ENCODE measurements at regions of chr2 and their contacts with region 1.

Region 1: DNA sequence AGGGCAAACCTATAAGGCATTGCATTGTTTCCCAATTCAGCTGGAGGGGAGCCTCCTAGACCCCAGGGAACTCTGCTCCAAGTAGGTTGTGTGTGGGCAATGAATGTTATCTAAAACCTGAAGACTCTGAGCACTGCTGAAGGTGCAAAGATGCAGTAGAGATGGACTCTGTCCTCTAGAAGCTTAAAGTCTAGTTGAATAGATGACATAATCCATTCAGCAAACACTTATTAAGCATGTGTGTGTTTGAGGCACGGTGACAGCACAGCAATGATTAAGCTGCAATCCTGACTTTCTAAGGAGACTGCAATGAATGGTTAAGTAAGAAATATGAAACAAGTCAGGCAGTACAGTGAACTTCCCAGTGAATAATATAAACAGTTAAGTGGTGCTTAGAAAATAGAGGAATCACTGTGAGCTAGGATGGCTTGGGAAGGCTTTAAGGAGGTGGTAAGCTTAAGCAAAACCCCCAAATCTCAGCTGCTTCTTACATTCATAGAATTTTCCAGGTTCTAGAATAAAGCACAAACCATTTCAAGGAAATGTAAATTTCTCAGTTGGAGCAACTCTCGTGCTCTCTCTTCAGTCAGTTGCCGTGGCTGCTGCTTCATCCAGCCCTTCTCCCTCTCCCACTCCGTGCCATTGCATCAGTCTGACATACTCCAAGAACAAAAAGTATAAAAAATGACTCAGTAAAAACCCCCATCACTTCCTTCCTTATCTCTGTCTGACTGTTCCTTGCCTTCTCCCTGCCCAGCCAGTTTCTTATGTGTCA is 19.1 kb downstream of the MXD1 start:
- DNase-seq: peak; percentile 87
- H3K4me3 ChIP-seq: peak overlapping the region in 1 of 3 experiments; percentile 30
- H3K27ac ChIP-seq: peak overlapping the region; percentile 95
- H3K4me1 ChIP-seq: peaks cover 37% of the 10 kb centered on the region
- H3K27me3 ChIP-seq: no peaks in the 10 kb centered on the region
- CTCF ChIP-seq: no peak
- POLR2A ChIP-seq: peak; percentile 77

Region 2: GRCh38 chr2:69946351-69947077 is 12.5 kb after region 1 on chr2:
- CTCF ChIA-PET with region 1: interaction called, 19 read pairs
- POLR2A ChIA-PET with region 1: interaction called, 7 read pairs
- dilution Hi-C with region 1: no loop called
- intact Hi-C with region 1: no loop called
- DNase-seq: peak; percentile 41
- H3K4me3 ChIP-seq: no peak overlapping the region
- H3K27ac ChIP-seq: peak overlapping the region; percentile 54
- H3K4me1 ChIP-seq: peaks cover 25% of the 10 kb centered on the region
- H3K27me3 ChIP-seq: no peaks in the 10 kb centered on the region
- CTCF ChIP-seq: no peak
- POLR2A ChIP-seq: no peak

Region 3: GRCh38 chr2:70009762-70010575 is 75.9 kb after region 1 on chr2:
- CTCF ChIA-PET with region 1: no interaction called
- POLR2A ChIA-PET with region 1: no interaction called
- dilution Hi-C with region 1: no loop called
- intact Hi-C with region 1: no loop called
- DNase-seq: no peak
- H3K4me3 ChIP-seq: no peak overlapping the region
- H3K27ac ChIP-seq: no peak overlapping the region
- H3K4me1 ChIP-seq: no peaks in the 10 kb centered on the region
- H3K27me3 ChIP-seq: no peaks in the 10 kb centered on the region
- CTCF ChIP-seq: no peak
- POLR2A ChIP-seq: no peak

Region 4: DNA sequence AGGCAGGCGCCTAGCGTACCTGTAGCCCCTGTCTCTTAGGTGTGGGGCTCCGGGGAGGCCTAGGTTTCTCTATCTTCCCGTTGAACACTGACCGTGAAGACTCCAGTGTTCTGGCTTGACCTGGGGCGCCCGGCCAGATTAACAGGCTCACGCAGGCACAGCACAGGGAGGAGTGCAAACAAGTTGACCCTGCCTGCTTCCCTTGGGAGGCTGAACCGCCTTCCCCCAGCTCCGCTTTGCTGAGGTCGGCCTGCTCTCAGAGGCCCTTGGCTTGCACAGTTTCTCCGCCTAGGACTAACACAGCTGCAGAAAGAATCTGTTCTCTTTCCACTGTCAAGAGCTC is 324.5 kb after region 1 on chr2:
- CTCF ChIA-PET with region 1: no interaction called
- POLR2A ChIA-PET with region 1: no interaction called
- dilution Hi-C with region 1: no loop called
- intact Hi-C with region 1: no loop called
- DNase-seq: no peak
- H3K4me3 ChIP-seq: peak overlapping the region; percentile 57 to 77 (median 73)
- H3K27ac ChIP-seq: no peak overlapping the region
- H3K4me1 ChIP-seq: peaks cover 4% of the 10 kb centered on the region
- H3K27me3 ChIP-seq: no peaks in the 10 kb centered on the region
- CTCF ChIP-seq: no peak
- POLR2A ChIP-seq: no peak

Region 5: DNA sequence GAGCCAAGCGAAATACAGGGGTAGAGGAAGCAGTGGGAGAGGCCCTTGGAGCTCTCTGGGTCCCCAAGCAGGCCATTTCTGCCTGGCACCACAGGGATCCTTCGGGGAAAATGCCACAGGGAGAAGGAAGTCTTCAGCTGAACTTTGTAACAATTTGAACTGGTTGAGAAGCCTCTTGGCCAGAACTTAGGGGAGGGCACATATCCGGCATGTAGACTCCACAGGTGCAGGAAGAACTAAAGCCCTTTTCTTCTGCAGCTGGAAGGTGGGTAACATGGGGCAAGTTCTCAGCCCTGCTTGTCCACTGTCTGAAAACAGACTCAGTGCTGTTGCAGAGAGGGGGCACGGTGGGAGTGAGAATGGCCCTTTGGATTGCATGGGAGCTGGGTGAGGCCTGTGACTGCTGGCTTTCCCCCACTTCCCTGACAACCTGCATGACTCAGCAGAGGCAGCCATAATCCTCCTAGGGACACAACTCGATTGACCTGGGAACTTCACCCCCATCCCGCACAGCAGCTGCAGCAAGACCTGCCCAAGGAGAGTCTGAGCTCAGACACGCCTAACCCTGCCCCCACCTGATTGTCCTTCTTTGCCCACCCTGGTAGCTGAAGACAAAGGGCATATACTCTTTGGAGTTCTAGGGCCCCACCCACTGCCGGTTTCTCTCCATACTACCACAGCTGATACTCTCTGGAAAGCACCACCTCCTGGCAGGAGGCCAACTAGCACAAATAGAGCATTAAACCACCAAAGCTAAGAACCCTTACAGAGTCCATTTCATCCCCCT is 469.4 kb after region 1 on chr2:
- CTCF ChIA-PET with region 1: no interaction called
- POLR2A ChIA-PET with region 1: no interaction called
- dilution Hi-C with region 1: no loop called
- intact Hi-C with region 1: no loop called
- DNase-seq: no peak
- H3K4me3 ChIP-seq: no peak overlapping the region
- H3K27ac ChIP-seq: no peak overlapping the region
- H3K4me1 ChIP-seq: no peaks in the 10 kb centered on the region
- H3K27me3 ChIP-seq: peaks cover 9 to 12% of the 10 kb centered on the region in 2 experiments
- CTCF ChIP-seq: no peak
- POLR2A ChIP-seq: no peak

Measured in endothelial cell of umbilical vein (primary cell).